Heart left ventricle (tissue), 16 donors: ENCODE measurements at regions of chr9 and their contacts with region 1.

Region 1: DNA sequence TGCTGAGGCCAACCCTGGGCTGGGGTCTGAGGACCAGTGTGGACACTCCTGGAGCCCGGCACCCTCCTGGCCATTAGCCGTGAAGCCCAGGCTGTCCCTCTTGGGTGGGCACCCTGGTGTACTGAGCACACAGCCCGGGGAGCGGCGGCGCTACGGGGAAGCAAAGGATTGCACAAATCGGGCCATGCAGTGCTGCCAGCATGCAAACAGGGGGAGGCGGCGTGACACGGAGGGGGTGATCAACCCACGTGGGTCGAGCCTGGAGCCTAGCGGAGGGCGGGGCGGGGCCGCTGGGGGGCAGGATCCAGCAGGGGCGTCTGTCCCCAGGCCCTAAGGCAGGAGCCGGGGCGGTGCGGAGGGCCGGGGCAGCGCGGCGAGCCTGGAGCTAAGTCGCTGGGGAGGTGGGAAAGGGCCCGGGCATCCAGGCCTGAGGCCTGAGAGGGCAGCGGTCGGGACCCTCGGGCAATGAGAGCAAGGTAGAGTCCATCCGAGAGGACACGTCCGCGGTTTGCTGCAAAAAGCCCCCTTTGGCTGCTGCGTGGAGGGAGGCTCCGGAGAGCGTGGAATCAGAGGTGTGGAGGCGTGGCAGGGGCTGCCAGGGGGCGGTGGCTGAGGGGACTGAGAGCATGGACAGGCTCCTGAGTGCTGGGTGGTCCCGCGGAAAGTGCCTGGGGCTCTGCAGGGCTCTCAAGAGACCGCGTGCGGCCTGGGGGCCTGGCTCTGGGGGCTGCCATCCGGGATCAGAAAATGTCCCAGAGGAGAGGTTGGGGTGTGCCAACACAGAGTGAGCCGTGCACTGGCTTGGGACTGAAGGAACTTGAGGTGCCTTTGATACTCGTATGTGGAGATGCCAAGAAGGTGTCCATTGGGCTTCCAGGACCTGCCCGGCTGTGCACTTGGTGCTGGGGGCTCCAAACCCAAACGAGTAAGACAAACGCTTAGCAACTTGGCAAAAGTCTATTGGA is 94.2 kb downstream of the BARX1 start:
- DNase-seq: no peak
- ATAC-seq: peak in 1 of 4 donors; percentile 25
- H3K4me3 ChIP-seq: peak overlapping the region in 2 of 12 donors; percentile 12 to 18
- H3K27ac ChIP-seq: no peak overlapping the region
- H3K4me1 ChIP-seq: peaks cover 0 to 6% (median 0%) of the 10 kb centered on the region in 12 donors
- H3K27me3 ChIP-seq: peaks cover 7 to 61% (median 32%) of the 10 kb centered on the region in 9 donors
- CTCF ChIP-seq: no peak
- POLR2A ChIP-seq: no peak

Region 2: DNA sequence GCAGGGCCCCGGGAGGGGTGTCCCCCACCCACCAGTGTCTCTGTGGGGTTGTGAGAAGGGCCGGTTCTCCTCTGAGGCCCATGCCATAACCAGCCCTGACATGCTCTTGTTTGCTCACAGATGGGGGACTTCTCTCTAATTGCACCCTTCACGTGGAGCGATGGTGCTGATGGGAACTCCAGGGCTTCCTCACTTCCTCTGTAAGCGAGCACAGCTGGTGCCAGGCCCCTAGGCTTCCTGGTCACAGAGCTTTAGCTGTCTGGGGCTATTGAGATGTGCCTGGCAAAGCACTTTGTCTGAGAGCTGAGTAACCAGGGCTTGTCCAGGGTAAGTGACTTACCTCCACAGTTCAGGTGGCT is 248.2 kb before region 1 on chr9:
- intact Hi-C with region 1: no loop called
- DNase-seq: no peak
- ATAC-seq: peak in 3 of 4 donors; percentile 19 to 57 (median 48)
- H3K4me3 ChIP-seq: no peak overlapping the region
- H3K27ac ChIP-seq: no peak overlapping the region
- H3K4me1 ChIP-seq: peaks cover 0 to 31% (median 20%) of the 10 kb centered on the region in 12 donors
- H3K27me3 ChIP-seq: no peaks in the 10 kb centered on the region
- CTCF ChIP-seq: no peak
- POLR2A ChIP-seq: no peak

Region 3: GRCh38 chr9:93807166-93808074 is 53.6 kb before region 1 on chr9:
- intact Hi-C with region 1: loop called in 1 of 10 experiments (anchors 10 kb)
- DNase-seq: no peak
- ATAC-seq: peak in 1 of 4 donors; percentile 33
- H3K4me3 ChIP-seq: no peak overlapping the region
- H3K27ac ChIP-seq: no peak overlapping the region
- H3K4me1 ChIP-seq: no peaks in the 10 kb centered on the region
- H3K27me3 ChIP-seq: peaks cover 0 to 26% (median 4%) of the 10 kb centered on the region in 9 donors
- CTCF ChIP-seq: no peak
- POLR2A ChIP-seq: no peak